Natural killer cell (primary cell): ENCODE measurements at regions of chr17 and their contacts with region 1.

Region 1: GRCh38 chr17:38349097-38349730 is 2.4 kb upstream of the SOCS7 start:
- DNase-seq: peak; percentile 75 to 90
- ATAC-seq: peak; percentile 52 to 66 (median 52)
- H3K4me3 ChIP-seq: no peak overlapping the region
- H3K4me3 Mint-ChIP-seq: no peak overlapping the region
- H3K27ac ChIP-seq: no peak overlapping the region
- H3K27ac Mint-ChIP-seq: no peak overlapping the region
- H3K4me1 ChIP-seq: peaks cover 19% of the 10 kb centered on the region
- H3K4me1 Mint-ChIP-seq: peaks cover 25 to 26% of the 10 kb centered on the region in 2 donors
- H3K27me3 ChIP-seq: no peaks in the 10 kb centered on the region
- H3K27me3 Mint-ChIP-seq: peaks cover 0 to under 1% of the 10 kb centered on the region in 2 donors
- CTCF ChIP-seq: peak; percentile 91

Region 2: DNA sequence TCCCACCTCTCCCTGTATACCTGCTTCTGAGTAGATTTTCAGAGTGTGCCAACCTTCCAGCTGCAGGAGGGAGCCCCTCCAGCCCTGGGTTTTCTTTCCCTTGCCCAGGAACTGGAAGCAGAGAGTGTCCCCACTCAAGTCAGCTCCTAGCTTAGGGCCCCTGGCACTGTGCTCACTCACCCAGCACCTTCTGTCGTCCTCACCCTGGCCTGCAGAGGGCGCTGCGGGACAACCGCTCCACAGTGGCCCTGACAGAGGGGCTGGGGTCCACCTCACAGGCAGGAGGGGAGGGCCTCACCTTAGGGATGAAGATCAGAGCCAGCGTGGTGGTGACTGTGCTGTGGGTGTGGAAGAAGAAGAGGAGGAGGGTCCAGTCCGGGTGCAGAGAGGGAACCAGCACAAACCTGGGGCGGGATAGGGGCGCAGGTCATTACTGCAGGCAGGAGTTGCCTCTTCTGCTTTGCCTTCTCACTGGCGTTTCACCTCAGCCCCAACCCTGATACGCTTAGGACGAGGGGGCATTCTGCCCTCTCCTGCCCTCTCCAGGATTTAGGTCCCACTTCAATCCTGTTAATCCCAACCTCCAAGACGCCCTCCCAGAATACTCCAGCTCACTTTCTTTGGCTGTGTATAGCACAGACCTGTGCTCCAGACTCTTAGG is 15.4 kb before region 1 on chr17:
- intact Hi-C with region 1: no loop called
- DNase-seq: peak in 1 of 2 donors; percentile 53
- ATAC-seq: peak; percentile 31 to 57 (median 52)
- H3K4me3 ChIP-seq: no peak overlapping the region
- H3K4me3 Mint-ChIP-seq: no peak overlapping the region
- H3K27ac ChIP-seq: no peak overlapping the region
- H3K27ac Mint-ChIP-seq: no peak overlapping the region
- H3K4me1 ChIP-seq: no peaks in the 10 kb centered on the region
- H3K4me1 Mint-ChIP-seq: no peaks in the 10 kb centered on the region
- H3K27me3 ChIP-seq: no peaks in the 10 kb centered on the region
- H3K27me3 Mint-ChIP-seq: peaks cover 6 to 10% of the 10 kb centered on the region in 2 donors
- CTCF ChIP-seq: peak; percentile 31

Region 3: DNA sequence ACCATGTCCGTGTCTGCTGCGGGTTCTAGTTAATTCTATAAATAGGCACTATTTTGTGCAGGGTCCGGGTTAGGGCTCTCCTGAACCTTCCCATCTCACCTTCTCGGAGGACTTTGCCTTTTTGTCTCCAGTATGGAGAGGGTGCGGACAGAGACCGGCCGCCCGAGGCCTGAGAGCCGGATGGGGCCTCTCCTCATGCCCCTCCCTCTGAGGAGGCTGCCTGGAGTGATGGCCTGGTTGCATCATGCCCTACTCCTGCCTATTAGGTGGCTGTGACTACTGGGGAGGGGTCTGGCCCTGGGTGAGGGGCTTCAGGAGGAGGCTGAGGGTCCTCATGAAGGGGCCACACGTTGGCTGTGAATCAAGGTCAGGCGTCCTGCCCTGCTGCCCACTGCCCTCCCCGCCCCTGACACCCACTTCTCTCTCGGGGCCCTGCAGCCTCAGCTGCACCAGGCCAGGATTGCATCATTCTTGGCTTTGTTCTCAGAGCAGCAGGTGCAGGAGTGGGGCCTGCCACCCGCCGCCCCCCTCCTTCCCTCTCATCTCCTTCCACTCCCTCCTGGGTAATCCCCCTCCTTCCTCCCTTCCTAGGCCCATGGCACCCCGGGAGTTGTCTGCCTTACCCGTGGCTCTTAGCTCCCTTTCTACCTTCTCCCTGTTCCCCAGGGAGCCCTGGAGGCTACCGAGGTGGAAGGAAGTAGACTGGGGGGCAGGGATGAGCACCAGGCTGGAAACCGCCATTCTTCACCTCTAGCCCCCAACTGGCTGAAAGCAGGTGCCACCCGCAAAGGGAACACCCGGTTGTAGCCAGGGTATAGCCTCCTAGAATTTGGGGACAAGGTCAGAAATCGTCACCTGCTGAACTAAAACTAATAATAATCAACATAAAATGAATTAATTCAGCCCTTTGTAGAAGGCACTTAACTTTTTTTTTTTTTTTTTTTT is 66.3 kb after region 1 on chr17:
- intact Hi-C with region 1: loop called (anchors 1 kb)
- DNase-seq: no peak
- ATAC-seq: no peak
- H3K4me3 ChIP-seq: no peak overlapping the region
- H3K4me3 Mint-ChIP-seq: no peak overlapping the region
- H3K27ac ChIP-seq: no peak overlapping the region
- H3K27ac Mint-ChIP-seq: no peak overlapping the region
- H3K4me1 ChIP-seq: peaks cover 13% of the 10 kb centered on the region
- H3K4me1 Mint-ChIP-seq: peaks cover 5 to 9% of the 10 kb centered on the region in 2 donors
- H3K27me3 ChIP-seq: peaks cover 16% of the 10 kb centered on the region
- H3K27me3 Mint-ChIP-seq: peaks cover 10 to 23% of the 10 kb centered on the region in 2 donors
- CTCF ChIP-seq: no peak

Region 4: DNA sequence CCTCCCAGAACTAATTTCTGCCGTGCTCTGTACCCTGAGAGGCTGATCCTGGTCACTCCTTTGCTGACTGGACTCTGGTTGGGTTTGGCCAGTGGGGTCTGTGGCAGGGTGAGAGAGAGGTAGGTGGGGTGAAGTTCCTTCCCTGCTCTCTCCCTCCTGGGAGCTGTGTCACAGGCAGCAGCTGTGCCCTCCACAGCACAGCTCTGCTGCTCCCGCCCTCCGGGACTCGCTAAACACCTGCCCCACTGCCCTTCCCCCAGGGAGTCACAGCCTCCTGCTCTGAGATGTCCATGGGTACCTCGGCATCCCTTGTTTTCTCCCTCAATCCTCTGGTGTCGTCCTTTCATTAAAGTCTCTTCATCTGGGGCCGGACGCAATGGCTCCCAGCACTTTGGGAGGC is 190.2 kb after region 1 on chr17:
- intact Hi-C with region 1: no loop called
- DNase-seq: no peak
- ATAC-seq: no peak
- H3K4me3 ChIP-seq: no peak overlapping the region
- H3K4me3 Mint-ChIP-seq: no peak overlapping the region
- H3K27ac ChIP-seq: no peak overlapping the region
- H3K27ac Mint-ChIP-seq: no peak overlapping the region
- H3K4me1 ChIP-seq: no peaks in the 10 kb centered on the region
- H3K4me1 Mint-ChIP-seq: no peaks in the 10 kb centered on the region
- H3K27me3 ChIP-seq: no peaks in the 10 kb centered on the region
- H3K27me3 Mint-ChIP-seq: peaks cover 8 to 11% of the 10 kb centered on the region in 2 donors
- CTCF ChIP-seq: no peak